Lower leg skin (tissue), 4 donors: ENCODE measurements at regions of chr3 and their contacts with region 1.

Region 1: DNA sequence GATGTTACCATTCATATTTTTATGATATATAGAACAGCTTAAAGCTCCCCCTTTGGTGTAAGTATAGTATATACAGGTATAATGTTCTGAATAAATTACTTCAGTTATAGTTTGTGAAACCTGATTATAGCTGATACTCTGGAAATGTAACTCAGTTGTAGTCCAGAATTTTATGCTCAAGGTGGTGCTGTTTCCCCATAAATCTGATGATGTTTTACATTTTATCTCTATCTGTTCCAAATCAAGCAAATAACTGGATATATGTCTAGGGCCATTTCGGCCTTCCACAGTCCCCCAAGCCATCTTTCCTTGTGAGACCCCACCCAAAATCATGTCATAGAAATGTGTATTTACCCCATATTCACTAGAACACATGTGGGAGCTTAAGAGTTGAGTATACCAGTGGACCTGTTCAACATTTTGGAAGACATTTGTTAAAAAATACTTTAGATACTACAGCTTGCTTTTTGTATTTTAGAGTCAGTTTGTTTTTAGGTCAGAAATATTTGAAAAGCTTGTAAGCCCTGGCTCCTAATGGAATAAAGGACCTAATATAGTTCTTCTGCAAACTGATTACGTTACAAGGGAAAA is 107.1 kb downstream of the ATG7 start:
- DNase-seq: no peak
- H3K4me3 ChIP-seq: no peak overlapping the region
- CTCF ChIP-seq: no peak
- POLR2A ChIP-seq: no peak

Region 2: GRCh38 chr3:11651900-11652299 is 272.6 kb after region 1 on chr3:
- intact Hi-C with region 1: loop called (anchors 10 kb)
- DNase-seq: no peak
- H3K4me3 ChIP-seq: no peak overlapping the region
- CTCF ChIP-seq: no peak
- POLR2A ChIP-seq: no peak

Region 3: GRCh38 chr3:11835028-11835639 is 455.8 kb after region 1 on chr3:
- intact Hi-C with region 1: loop called (anchors 5 kb)
- DNase-seq: no peak
- H3K4me3 ChIP-seq: no peak overlapping the region
- CTCF ChIP-seq: no peak
- POLR2A ChIP-seq: no peak